Activated CD4-positive, alpha-beta memory T cell treated with anti-CD3 and anti-CD28 coated beads for 36 hours (primary cell): ENCODE measurements at regions of chr14 and their contacts with region 1.

Region 1: GRCh38 chr14:93959239-93960107 is 16.9 kb downstream of the ASB2 start:
- DNase-seq: peak; percentile 98
- H3K4me3 Mint-ChIP-seq: peak overlapping the region; percentile 78
- H3K27ac Mint-ChIP-seq: peak overlapping the region; percentile 100
- H3K4me1 Mint-ChIP-seq: peaks cover 94% of the 10 kb centered on the region
- H3K27me3 Mint-ChIP-seq: no peaks in the 10 kb centered on the region

Region 2: DNA sequence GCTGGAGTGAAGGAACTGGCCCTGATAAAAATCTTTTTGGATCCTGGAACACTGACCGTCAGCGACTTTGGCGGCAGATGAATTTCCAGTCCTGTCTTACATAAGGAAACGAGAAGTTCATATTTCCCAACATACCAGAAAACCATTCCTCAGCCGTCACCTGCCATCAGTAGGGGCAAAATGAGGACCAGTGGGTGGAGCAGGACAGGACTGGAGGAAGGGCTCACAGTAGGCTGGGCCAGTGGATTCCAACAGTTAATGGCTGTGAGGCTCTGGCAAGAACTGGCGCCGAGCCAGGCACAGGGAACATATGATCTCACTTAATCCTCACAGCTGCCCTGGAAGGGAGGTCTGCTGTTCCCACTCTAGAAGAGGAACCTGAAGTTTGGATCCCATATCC is 99.5 kb before region 1 on chr14:
- CTCF ChIA-PET with region 1: no interaction called
- POLR2A ChIA-PET with region 1: no interaction called
- intact Hi-C with region 1: no loop called
- DNase-seq: no peak
- H3K4me3 Mint-ChIP-seq: no peak overlapping the region
- H3K27ac Mint-ChIP-seq: no peak overlapping the region
- H3K4me1 Mint-ChIP-seq: no peaks in the 10 kb centered on the region
- H3K27me3 Mint-ChIP-seq: peaks cover 7% of the 10 kb centered on the region

Region 3: GRCh38 chr14:93970549-93970946 is 11.1 kb after region 1 on chr14:
- CTCF ChIA-PET with region 1: interaction called, 94 read pairs
- POLR2A ChIA-PET with region 1: interaction called, 447 read pairs
- intact Hi-C with region 1: loop called (anchors 1 kb)
- DNase-seq: peak; percentile 82
- H3K4me3 Mint-ChIP-seq: peak overlapping the region; percentile 74
- H3K27ac Mint-ChIP-seq: peak overlapping the region; percentile 96
- H3K4me1 Mint-ChIP-seq: peaks cover 78% of the 10 kb centered on the region
- H3K27me3 Mint-ChIP-seq: no peaks in the 10 kb centered on the region

Region 4: DNA sequence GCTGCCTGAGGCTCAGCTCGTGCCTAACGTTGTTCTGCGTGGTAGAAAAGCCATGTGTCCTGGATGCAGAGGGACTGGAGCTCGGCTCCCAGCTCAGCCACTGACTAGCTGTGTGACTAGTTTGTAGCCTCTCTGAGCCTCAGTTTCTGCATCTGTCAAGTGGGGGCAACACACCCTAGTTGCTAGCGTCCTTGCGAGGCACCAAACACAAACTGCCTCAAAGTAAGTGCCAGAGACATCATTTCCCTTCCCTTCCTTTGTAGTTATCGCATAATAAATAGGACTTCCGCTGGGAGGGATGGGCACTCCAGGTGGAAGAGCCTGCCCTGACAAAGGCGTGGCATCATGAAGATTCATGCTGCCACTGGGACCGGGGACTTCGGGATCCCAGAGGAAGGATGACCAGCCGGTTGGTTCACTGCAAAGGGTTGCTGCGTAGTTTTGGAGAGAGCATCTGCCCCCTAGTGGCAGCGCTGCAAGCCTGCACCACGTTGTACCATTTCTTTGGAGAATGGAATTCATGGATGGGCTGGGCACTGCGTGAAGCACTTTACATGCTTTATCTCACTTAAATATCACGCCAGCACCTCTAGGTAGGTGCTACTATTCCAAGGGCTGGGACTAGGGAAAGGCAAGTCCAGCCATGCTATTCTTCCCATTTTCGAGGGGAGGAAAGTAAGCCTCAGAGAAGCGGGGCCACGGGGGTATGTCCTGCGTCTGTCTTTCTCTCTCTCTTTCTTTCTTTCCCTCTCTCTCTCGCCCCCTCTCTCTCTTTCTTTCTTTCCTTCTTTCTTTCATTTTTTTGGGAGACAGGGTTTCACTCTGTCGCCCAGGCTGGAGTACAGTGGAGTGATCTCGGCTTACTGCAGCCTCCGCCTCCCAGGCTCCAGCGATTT is 42.3 kb after region 1 on chr14:
- CTCF ChIA-PET with region 1: interaction called, 6 read pairs
- POLR2A ChIA-PET with region 1: interaction called, 17 read pairs
- intact Hi-C with region 1: no loop called
- DNase-seq: peak; percentile 72
- H3K4me3 Mint-ChIP-seq: no peak overlapping the region
- H3K27ac Mint-ChIP-seq: peak overlapping the region; percentile 50
- H3K4me1 Mint-ChIP-seq: peaks cover 29% of the 10 kb centered on the region
- H3K27me3 Mint-ChIP-seq: no peaks in the 10 kb centered on the region

Region 5: DNA sequence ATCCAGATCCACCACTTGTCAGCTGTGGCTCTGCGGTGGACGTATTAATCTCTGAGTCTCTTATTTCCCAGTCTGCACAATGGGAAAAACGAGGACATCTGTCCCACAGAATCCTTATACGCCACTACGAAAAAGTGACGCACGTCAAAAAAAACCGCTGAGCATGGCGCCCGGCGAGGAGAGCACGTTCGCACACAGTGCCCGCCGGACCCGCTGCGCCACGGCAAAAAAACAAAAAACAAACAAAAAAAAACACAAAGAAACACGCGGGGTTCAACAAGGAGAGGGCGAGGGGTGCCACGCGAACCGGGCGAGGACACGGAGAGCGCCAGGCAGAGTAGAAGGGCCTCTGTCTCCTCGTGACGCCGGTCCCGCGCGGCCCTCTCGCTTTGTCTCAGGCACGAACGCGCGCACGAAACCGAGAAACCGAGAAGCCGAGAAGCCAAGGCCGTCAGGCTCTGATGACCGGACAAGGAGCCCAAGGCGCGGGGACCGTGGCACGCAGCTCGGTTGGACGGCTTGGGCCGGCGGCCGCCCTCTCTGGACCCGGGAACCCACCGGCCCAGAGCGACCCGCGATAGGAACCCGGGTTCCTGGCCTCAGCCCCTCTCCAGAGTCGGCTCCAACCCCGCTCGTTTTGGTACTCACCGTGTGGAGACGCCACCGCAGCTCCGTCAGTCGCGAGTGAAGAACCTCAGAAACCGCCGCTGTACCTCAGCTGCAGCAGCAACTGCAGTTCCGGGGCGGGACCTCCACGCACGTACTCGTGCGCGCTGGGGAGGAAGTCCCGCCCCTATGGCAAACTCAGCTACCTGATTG is 121.2 kb after region 1 on chr14 and contains the start of gene DDX24:
- CTCF ChIA-PET with region 1: no interaction called
- POLR2A ChIA-PET with region 1: interaction called, 4 read pairs
- intact Hi-C with region 1: loop called (anchors 2 kb)
- DNase-seq: peak; percentile 98
- H3K4me3 Mint-ChIP-seq: peak within 1 kb of the TSS; percentile 99
- H3K27ac Mint-ChIP-seq: peak within 1 kb of the TSS; percentile 99
- H3K4me1 Mint-ChIP-seq: peaks cover 50% of the 10 kb centered on the region
- H3K27me3 Mint-ChIP-seq: no peaks in the 10 kb centered on the region
- total RNA-seq, gene DDX24: 241 to 252 TPM

Region 6: DNA sequence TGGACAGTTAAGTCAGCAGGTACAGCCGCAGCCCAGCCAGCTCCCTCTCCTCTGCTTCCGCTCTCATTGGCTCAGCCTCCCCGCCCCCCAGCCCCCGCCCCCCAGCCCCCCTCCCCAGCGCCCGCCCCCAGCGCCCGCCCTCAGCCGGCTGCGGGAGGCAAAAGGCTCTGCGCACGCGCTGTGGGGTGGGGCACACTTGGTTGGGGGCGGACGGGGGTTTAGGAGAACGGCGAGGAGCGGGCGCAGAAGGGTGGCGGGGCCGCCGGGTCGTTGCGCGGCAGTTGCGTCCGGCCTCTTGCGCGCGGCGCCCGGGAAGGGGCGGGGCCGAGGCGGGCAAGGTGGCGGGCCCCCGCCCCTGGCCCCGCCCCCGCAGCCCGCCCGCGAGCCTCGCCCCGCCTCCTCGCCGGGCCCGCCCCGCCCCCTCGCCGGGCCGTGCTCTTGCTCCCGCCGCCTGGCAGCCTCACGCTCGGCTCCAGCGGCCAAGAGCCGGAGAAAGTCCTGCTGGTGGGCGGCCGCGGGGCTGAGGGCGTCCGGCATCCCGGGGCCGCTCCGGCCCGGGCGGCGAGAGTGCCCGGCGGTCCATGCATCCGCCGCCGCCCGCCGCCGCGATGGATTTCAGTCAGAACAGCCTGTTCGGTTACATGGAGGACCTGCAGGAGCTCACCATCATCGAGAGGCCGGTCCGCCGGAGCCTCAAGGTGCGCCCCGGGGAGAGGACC is 214.6 kb after region 1 on chr14 and contains the start of gene PPP4R4:
- CTCF ChIA-PET with region 1: no interaction called
- POLR2A ChIA-PET with region 1: no interaction called
- intact Hi-C with region 1: loop called (anchors 5 kb)
- DNase-seq: peak; percentile 95
- H3K4me3 Mint-ChIP-seq: peak within 1 kb of the TSS; percentile 79
- H3K27ac Mint-ChIP-seq: peak within 1 kb of the TSS; percentile 73
- H3K4me1 Mint-ChIP-seq: peaks cover 39% of the 10 kb centered on the region
- H3K27me3 Mint-ChIP-seq: no peaks in the 10 kb centered on the region
- total RNA-seq, gene PPP4R4: 17.0 to 19.2 TPM